Aorta (tissue), 5 donors: ENCODE measurements at regions of chr5 and their contacts with region 1.

Region 1: GRCh38 chr5:68252673-68253623 is 37.4 kb downstream of the PIK3R1 start:
- DNase-seq: peak in 1 of 2 donors; percentile 63
- ATAC-seq: peak; percentile 79
- H3K4me3 ChIP-seq: peak overlapping the region in 1 of 2 donors; percentile 3
- H3K27ac ChIP-seq: peak overlapping the region; percentile 48 to 57
- H3K4me1 ChIP-seq: peaks cover 6 to 28% of the 10 kb centered on the region in 2 donors
- H3K27me3 ChIP-seq: no peaks in the 10 kb centered on the region

Region 2: DNA sequence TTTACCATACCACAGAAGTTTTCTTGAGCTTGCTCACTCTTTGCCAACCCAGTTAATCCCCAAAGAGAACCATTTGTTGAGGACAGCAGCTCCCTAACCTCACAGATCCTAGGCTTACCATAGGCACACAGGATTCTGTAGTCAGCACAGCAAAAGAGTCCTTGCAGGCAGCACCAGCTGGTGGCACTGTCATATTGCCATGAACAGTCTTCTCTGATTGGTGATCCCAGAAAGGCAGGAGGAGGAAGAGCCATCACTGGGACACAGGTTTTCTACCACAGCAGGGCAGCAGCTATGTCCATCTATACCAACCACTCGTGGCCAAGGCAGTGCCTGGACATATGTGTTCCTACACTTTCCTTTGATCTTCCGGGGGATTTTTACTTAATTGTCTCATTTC is 759.3 kb before region 1 on chr5:
- intact Hi-C with region 1: loop called in 1 of 2 experiments (anchors 5 kb)
- DNase-seq: no peak
- ATAC-seq: peak; percentile 64
- H3K4me3 ChIP-seq: no peak overlapping the region
- H3K27ac ChIP-seq: no peak overlapping the region
- H3K4me1 ChIP-seq: peaks cover 0 to 2% of the 10 kb centered on the region in 2 donors
- H3K27me3 ChIP-seq: no peaks in the 10 kb centered on the region

Region 3: GRCh38 chr5:67510204-67510603 is 742.7 kb before region 1 on chr5:
- intact Hi-C with region 1: no loop called
- DNase-seq: no peak
- ATAC-seq: no peak
- H3K4me3 ChIP-seq: no peak overlapping the region
- H3K27ac ChIP-seq: no peak overlapping the region
- H3K4me1 ChIP-seq: no peaks in the 10 kb centered on the region
- H3K27me3 ChIP-seq: no peaks in the 10 kb centered on the region

Region 4: GRCh38 chr5:68215208-68215897 is 37.6 kb before region 1 on chr5 and contains the start of gene PIK3R1:
- intact Hi-C with region 1: loop called in 1 of 2 experiments (anchors 5 kb)
- DNase-seq: peak; percentile 97 to 98
- ATAC-seq: peak; percentile 96
- H3K4me3 ChIP-seq: peak within 1 kb of the TSS; percentile 93 to 97
- H3K27ac ChIP-seq: peak within 1 kb of the TSS; percentile 86 to 95
- H3K4me1 ChIP-seq: peaks cover 1% of the 10 kb centered on the region in 2 donors
- H3K27me3 ChIP-seq: no peaks in the 10 kb centered on the region
- total RNA-seq, gene PIK3R1: 63.4 to 132 TPM